ENCODE measurements at regions of chr1 and their contacts with region 1.

Region 1: DNA sequence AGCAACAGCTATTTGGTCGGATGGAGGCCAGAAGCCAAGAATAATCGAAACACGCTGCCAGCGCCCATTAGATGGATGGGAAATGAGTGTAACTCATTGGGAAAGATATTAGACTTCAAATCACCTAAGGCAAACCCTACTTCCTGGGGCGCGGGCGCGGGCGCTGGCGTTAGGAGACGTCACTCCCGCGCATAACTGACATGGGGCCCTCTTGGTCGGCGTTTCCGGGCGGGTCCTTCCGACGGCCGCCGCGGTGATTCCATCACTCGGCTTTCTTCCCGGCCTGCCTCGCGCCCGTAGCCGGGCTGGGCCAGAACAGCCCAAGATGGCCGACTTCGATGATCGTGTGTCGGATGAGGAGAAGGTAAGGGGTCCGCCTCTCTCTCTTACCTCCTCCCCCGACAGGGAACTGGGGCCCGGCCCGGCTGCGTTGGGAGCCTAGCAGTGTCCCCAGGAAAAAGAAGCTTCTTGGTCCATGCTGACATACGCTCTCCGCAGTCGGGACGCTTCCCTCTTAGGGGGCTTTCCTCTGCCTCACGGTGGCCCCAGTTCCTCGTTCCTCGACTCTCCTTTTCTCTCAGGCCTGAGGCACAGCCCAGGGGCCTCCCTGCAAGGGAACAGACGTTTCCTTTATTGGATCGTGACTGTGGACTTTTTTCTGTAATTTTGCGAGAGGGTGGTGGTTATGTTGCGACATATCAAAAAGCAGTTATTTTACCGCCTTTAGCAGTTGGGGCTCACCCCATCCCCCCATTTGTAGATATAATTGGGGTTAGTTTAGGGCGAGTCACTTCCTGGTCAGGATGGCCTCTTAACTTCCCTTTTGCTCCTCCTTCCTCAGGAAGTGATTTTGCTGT is at the start of gene CAPZA1:
- DNase-seq: peak; percentile 90 to 92
- ATAC-seq: peak; percentile 95 to 98 (median 97)
- H3K4me3 ChIP-seq: peak within 1 kb of the TSS; percentile 57 to 98 (median 83)
- H3K27ac ChIP-seq: peak within 1 kb of the TSS; percentile 91 to 100 (median 98)
- H3K4me1 ChIP-seq: peaks cover 3 to 66% (median 53%) of the 10 kb centered on the region in 9 donors
- H3K27me3 ChIP-seq: no peaks in the 10 kb centered on the region
- CTCF ChIP-seq: peak in 1 of 9 donors; percentile 10
- total RNA-seq, gene CAPZA1: 19.5 to 58.3 (median 23.2) TPM

Region 2: DNA sequence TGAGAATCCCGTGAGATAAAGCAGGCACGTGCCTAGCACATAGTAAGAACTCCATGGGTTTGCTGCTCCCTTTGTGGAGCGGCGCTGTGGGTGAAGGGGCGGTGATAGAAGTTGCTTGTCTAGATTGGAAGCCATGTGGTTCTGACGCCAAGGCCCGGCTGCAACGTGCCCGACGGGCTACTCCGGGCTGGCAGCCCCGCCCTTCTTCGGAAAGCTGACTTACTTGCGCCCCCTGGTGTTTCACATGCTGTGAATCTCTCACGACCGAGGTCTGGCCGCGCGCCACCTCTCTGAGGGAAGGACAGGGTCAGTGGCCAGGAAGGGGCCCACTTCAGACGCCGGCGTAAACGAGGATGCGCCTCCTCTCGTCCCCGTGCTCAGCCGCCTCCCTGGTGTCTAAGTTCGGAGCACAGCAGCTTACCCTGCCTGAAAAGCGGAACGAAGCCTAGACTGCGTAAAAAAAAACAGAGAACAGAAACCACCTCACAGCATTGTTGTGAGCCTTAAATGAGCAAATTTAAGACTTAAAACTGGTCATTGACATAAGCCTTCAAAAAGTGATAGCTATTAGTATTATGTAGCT is 153.6 kb before region 1 on chr1:
- intact Hi-C with region 1: loop called in 1 of 10 experiments (anchors 10 kb)
- DNase-seq: peak; percentile 94 to 97
- ATAC-seq: peak; percentile 93 to 98 (median 94)
- H3K4me3 ChIP-seq: peak overlapping the region in 9 of 10 donors; percentile 12 to 59 (median 49)
- H3K27ac ChIP-seq: peak overlapping the region; percentile 4 to 84 (median 74)
- H3K4me1 ChIP-seq: peaks cover 3 to 33% (median 18%) of the 10 kb centered on the region in 9 donors
- H3K27me3 ChIP-seq: no peaks in the 10 kb centered on the region
- CTCF ChIP-seq: peak; percentile 77 to 97 (median 90)

Region 3: GRCh38 chr1:112501810-112502641 is 117.7 kb before region 1 on chr1:
- intact Hi-C with region 1: loop called in 2 of 10 experiments (anchors 5 to 10 kb)
- DNase-seq: peak; percentile 76 to 77
- ATAC-seq: peak; percentile 84 to 92 (median 90)
- H3K4me3 ChIP-seq: peak overlapping the region; percentile 35 to 73 (median 61)
- H3K27ac ChIP-seq: peak overlapping the region in 8 of 10 donors; percentile 14 to 79 (median 72)
- H3K4me1 ChIP-seq: peaks cover 0 to 27% (median 15%) of the 10 kb centered on the region in 9 donors
- H3K27me3 ChIP-seq: peaks cover 0 to 78% (median 4%) of the 10 kb centered on the region in 7 donors
- CTCF ChIP-seq: peak; percentile 62 to 84 (median 71)

Region 4: DNA sequence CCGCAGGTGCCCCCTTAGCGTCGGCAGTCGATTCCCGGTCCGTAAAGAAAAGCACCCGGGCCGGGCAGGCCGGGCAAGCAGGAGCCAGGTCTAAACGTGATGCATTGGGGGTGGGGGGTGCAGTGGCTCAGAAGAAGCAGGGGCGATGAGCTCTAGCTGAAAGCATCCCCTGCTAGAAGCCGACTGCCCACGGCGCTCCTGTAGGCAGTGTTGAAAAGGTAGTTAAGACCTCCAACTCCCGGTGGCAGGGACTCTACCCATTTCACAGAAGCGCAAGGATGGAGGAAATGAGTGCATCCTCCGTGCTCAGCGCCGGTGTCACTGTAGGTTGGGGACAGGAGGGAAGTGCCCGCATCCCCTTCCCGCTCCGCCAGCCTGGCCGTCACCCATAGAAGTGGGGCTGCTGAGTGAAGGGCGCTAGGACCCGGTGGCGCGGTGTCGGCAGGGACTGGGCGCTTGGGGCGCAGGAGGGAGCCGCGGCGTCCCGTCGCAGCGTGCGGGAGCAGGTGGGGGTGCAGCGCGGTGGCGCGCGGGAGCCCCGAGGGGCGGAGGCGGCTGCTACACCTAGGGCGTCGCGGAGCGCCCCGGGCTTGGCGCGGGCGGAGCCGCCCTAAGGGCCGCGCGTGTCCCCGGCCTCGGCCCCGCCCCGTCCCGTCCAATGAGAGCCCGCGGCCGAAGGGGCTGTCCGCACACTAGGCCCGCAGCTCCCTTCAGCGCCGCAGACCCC is 111.3 kb before region 1 on chr1 and contains the start of gene WNT2B:
- intact Hi-C with region 1: loop called in 2 of 10 experiments (anchors 5 to 10 kb)
- DNase-seq: no peak
- ATAC-seq: peak; percentile 19 to 63 (median 34)
- H3K4me3 ChIP-seq: peak within 1 kb of the TSS; percentile 14 to 62 (median 54)
- H3K27ac ChIP-seq: no peak within 1 kb of the TSS
- H3K4me1 ChIP-seq: peaks cover 6 to 27% (median 14%) of the 10 kb centered on the region in 9 donors
- H3K27me3 ChIP-seq: peaks cover 0 to 70% (median 23%) of the 10 kb centered on the region in 7 donors
- CTCF ChIP-seq: no peak
- total RNA-seq, gene WNT2B: 0.72 to 3.3 (median 2.3) TPM

Region 5: GRCh38 chr1:112660072-112660471 is 40.3 kb after region 1 on chr1:
- intact Hi-C with region 1: no loop called
- DNase-seq: no peak
- ATAC-seq: no peak
- H3K4me3 ChIP-seq: no peak overlapping the region
- H3K27ac ChIP-seq: no peak overlapping the region
- H3K4me1 ChIP-seq: no peaks in the 10 kb centered on the region
- H3K27me3 ChIP-seq: no peaks in the 10 kb centered on the region
- CTCF ChIP-seq: no peak

Region 6: DNA sequence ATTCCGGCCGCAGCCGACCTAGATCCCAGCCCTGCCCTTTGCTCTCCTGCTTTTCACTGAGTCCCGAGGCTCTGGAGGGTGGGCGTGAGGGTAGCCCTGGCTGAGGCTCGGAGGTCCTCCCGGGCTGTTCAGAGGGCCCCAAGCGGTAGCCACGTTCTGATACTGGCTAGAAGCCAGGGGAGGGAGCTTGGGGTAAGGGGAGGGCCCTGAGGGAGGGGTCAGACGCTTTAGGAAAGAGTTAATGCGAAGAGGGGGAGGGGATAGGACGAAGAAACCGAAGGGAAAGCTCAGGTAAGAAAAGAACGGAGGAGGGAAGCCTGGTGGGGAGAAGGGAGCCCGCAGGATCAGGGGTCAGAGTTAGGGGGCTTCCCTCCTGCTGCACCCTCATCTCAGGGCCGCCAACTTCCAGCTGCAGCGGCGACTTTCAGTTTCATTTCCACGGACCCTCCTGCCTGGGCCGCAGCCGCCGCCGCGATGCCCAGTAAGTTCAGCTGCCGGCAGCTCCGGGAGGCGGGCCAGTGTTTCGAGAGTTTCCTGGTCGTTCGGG is 54.8 kb after region 1 on chr1 and contains the start of gene MOV10:
- intact Hi-C with region 1: loop called in 5 of 10 experiments (anchors 5 to 10 kb)
- DNase-seq: peak; percentile 73 to 76
- ATAC-seq: peak; percentile 73 to 84 (median 78)
- H3K4me3 ChIP-seq: peak within 1 kb of the TSS; percentile 67 to 92 (median 85)
- H3K27ac ChIP-seq: peak within 1 kb of the TSS; percentile 73 to 97 (median 93)
- H3K4me1 ChIP-seq: peaks cover 10 to 55% (median 30%) of the 10 kb centered on the region in 9 donors
- H3K27me3 ChIP-seq: no peaks in the 10 kb centered on the region
- CTCF ChIP-seq: no peak
- total RNA-seq, gene MOV10: 6.3 to 25.8 (median 13.9) TPM

Region 7: DNA sequence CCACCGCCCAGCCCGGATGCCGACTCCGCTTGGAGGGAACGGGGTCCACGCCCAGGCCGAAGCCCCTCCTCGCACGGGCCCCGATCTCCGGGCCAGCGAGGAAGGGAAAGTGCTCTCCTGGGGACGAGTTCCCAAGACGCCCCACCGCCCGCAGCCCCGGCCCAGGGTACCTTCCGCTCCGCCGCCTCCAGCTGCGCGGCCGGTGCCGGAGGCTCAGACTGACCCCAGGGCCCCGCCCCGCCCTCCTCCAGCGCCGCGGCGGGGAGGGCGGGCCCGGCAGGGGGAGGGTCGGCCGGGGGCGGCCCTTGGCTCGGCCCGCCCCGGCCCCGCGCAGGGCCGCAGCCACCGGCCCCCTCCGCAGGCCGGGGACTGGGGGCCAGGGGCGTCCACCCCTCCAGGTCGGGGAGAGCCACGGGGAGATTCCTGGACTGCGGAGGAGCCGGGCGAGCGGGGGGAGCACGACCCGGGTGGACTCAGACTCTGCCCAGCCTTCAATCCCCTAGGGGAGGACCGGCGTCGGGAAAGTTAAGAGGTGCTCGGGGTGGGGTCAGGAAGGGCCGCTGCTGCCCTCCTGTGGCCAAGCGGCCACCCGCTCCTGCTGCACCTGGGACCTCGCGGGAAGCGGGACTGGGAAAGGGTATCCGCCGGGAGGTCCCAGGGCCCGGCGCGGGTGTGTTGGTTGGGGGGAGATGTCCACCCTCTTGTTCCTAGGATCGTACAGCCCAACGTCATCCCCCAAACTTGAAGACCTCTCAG is 87.3 kb after region 1 on chr1 and contains the start of gene RHOC:
- intact Hi-C with region 1: loop called in 9 of 10 experiments (anchors 1 to 10 kb)
- DNase-seq: peak; percentile 88 to 92
- ATAC-seq: peak; percentile 63 to 88 (median 77)
- H3K4me3 ChIP-seq: peak within 1 kb of the TSS; percentile 89 to 100 (median 98)
- H3K27ac ChIP-seq: peak within 1 kb of the TSS; percentile 96 to 100 (median 99)
- H3K4me1 ChIP-seq: peaks cover 11 to 47% (median 44%) of the 10 kb centered on the region in 9 donors
- H3K27me3 ChIP-seq: no peaks in the 10 kb centered on the region
- CTCF ChIP-seq: peak; percentile 91 to 97 (median 95)
- total RNA-seq, gene RHOC: 115 to 225 (median 158) TPM

Region 8: GRCh38 chr1:112715264-112716053 is 95.7 kb after region 1 on chr1 and contains the start of gene PPM1J:
- intact Hi-C with region 1: loop called in 1 of 10 experiments (anchors 2 kb)
- DNase-seq: peak; percentile 98 to 99
- ATAC-seq: peak; percentile 87 to 96 (median 91)
- H3K4me3 ChIP-seq: peak within 1 kb of the TSS; percentile 55 to 81 (median 71)
- H3K27ac ChIP-seq: peak within 1 kb of the TSS in 9 of 10 donors; percentile 67 to 88 (median 78)
- H3K4me1 ChIP-seq: peaks cover 2 to 35% (median 23%) of the 10 kb centered on the region in 9 donors
- H3K27me3 ChIP-seq: peaks cover 0 to 30% (median 12%) of the 10 kb centered on the region in 7 donors
- CTCF ChIP-seq: peak in 1 of 9 donors; percentile 2
- total RNA-seq, gene PPM1J: 5.8 to 11.0 (median 8.5) TPM